ENCODE measurements at regions of chr9 and their contacts with region 1.

Region 1: GRCh38 chr9:134738869-134739659 is 97.5 kb downstream of the COL5A1 start:
- DNase-seq: peak; percentile 78 to 97 (median 88)

Region 2: GRCh38 chr9:134449221-134449894 is 289.7 kb before region 1 on chr9:
- intact Hi-C with region 1: loop called (anchors 1 kb)
- DNase-seq: peak; percentile 85 to 99 (median 92)

Region 3: GRCh38 chr9:134698587-134699342 is 40.3 kb before region 1 on chr9:
- intact Hi-C with region 1: loop called (anchors 1 kb)
- DNase-seq: peak; percentile 52 to 95 (median 70)

Measured in posterior cingulate gyrus (tissue), 11 donors.